ENCODE measurements at regions of chr16 and their contacts with region 1.

Region 1: GRCh38 chr16:4288148-4288921 is 15.5 kb upstream of the TFAP4 start:
- DNase-seq: no peak
- H3K4me3 ChIP-seq: no peak overlapping the region
- H3K27ac ChIP-seq: no peak overlapping the region
- H3K27me3 ChIP-seq: no peaks in the 10 kb centered on the region
- CTCF ChIP-seq: peak; percentile 92

Region 2: DNA sequence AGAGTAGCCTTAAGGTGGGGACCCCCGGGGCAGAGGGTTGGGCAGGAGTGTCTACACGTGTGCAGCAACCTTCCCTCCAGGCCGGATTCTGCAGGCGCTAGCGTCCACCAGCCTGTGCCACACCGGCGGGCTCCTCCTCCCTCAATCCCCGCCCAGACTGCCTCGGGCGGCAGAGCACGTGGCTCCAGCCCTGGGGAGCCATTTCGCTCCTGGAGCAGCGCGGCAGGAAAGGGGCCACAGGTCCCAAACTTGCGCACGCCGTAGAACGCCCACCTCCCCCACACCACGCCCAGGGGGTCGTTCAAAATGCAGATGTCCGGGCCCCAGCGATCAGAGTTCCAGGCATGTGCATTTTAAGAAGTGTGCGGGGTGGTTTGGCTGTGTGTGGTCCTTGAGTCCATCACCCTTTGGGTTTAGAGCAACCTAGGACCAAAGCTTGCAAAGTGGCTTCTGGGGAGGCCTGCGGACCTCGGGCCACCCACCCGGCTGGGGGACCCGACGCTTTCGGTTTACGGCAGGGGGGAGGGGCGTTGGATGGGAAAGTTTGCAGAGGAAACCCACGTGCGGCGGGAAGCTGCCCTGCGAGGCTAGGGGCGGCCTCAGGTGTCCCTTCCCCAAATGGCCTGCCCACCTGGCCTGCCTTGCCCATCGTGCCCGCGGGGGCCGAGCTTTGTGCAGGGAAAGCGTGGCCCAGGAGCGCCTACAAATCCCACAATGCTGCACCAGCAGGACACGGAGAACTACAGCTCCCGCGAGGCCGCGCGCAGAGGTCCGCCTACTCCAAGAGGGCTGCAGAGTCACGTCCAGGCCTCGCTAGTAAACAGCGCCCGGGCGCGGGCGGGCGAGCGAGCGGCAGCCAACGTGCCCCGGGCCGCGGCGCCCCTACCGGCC is 16.9 kb before region 1 on chr16:
- CTCF ChIA-PET with region 1: interaction called, 11 read pairs
- POLR2A ChIA-PET with region 1: interaction called, 6 read pairs
- DNase-seq: peak; percentile 76
- H3K4me3 ChIP-seq: peak overlapping the region; percentile 84
- H3K27ac ChIP-seq: peak overlapping the region; percentile 70
- H3K27me3 ChIP-seq: no peaks in the 10 kb centered on the region
- CTCF ChIP-seq: no peak

Region 3: DNA sequence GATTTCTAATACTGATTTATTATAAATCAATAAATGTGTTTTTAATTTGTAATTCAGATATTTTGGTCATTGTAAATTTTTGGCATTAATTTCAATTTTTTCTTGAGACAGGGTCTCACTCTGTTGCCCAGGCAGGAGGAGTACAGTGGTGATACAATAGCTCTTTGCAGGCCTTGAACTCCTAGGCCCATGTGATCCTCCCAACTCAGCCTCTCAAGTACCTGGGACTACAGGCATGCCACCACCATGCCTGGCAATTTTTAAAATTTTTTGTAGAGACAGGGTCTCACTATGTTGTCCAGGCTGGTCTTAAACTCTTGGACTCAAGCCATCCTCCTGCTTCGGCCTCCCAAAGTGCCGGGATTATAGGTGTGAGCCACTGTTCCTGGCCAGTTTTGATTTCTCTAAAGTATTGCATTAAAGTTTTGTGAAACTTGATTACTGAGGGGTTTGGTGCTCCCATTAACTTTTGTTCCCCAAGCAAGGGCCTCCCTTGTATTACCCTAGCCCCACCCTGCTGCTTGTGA is 10.3 kb before region 1 on chr16:
- CTCF ChIA-PET with region 1: interaction called, 11 read pairs
- POLR2A ChIA-PET with region 1: interaction called, 6 read pairs
- DNase-seq: no peak
- H3K4me3 ChIP-seq: no peak overlapping the region
- H3K27ac ChIP-seq: no peak overlapping the region
- H3K27me3 ChIP-seq: no peaks in the 10 kb centered on the region
- CTCF ChIP-seq: no peak

Region 4: GRCh38 chr16:4339909-4340308 is 51.6 kb after region 1 on chr16:
- CTCF ChIA-PET with region 1: interaction called, 10 read pairs
- POLR2A ChIA-PET with region 1: no interaction called
- DNase-seq: peak; percentile 32
- H3K4me3 ChIP-seq: no peak overlapping the region
- H3K27ac ChIP-seq: no peak overlapping the region
- H3K27me3 ChIP-seq: no peaks in the 10 kb centered on the region
- CTCF ChIP-seq: peak; percentile 39

Measured in AG04450 (cell line).